ENCODE measurements at regions of chr14 and their contacts with region 1.

Region 1: GRCh38 chr14:91911474-91912032 is 35.9 kb downstream of the FBLN5 start:
- DNase-seq: peak; percentile 46
- H3K4me3 ChIP-seq: no peak overlapping the region
- H3K27ac ChIP-seq: no peak overlapping the region
- H3K4me1 ChIP-seq: no peaks in the 10 kb centered on the region
- H3K27me3 ChIP-seq: no peaks in the 10 kb centered on the region
- CTCF ChIP-seq: peak in 2 of 4 experiments; percentile 26 to 47
- EP300 ChIP-seq: no peak
- POLR2A ChIP-seq: no peak

Region 2: GRCh38 chr14:91649930-91650329 is 261.6 kb before region 1 on chr14:
- intact Hi-C with region 1: loop called (anchors 5 kb)
- DNase-seq: no peak
- H3K4me3 ChIP-seq: no peak overlapping the region
- H3K27ac ChIP-seq: no peak overlapping the region
- H3K4me1 ChIP-seq: no peaks in the 10 kb centered on the region
- H3K27me3 ChIP-seq: no peaks in the 10 kb centered on the region
- CTCF ChIP-seq: peak; percentile 10 to 70 (median 52)
- EP300 ChIP-seq: no peak
- POLR2A ChIP-seq: no peak

Region 3: DNA sequence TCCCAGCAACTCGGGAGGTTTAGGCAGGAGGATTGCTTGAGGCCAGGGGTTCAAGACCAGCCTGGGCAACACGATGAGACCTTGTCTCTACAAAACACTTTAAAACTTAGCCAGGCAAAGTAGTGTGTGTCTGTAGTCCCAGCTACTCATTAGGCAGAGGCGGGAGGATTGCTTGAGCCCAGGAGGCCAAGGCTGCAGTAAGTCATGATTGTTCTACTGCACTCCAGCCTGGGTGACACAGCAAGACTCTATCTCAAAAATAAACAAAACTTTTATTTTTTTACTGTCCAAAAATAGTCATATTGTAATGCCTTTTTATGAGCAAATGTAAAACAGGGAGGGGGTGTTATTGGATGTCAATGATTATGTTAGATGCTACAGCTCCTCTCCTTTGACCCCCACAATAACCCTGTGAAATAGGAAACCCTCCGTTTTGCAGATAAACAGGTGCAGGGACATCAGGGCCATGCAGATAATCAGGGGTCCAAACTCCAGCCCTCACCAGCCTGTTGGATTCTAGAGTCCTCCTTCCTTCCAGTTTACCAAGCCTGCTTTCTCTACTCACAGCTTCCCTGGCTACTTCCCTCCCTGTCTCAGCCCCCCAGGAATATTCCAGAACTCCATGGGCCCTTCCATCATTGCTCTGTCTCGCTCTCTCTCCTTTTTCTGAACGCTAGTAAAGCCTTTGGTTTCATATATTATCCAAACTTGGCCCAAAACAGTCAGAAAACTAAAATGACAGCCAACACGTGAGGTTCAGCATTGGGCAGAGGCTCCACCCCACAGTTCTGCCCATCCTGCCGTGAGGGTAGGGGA is 41.8 kb after region 1 on chr14:
- intact Hi-C with region 1: no loop called
- DNase-seq: no peak
- H3K4me3 ChIP-seq: no peak overlapping the region
- H3K27ac ChIP-seq: no peak overlapping the region
- H3K4me1 ChIP-seq: peaks cover 0 to under 1% (median 0%) of the 10 kb centered on the region in 4 donors
- H3K27me3 ChIP-seq: no peaks in the 10 kb centered on the region
- CTCF ChIP-seq: no peak
- EP300 ChIP-seq: no peak
- POLR2A ChIP-seq: no peak

Region 4: DNA sequence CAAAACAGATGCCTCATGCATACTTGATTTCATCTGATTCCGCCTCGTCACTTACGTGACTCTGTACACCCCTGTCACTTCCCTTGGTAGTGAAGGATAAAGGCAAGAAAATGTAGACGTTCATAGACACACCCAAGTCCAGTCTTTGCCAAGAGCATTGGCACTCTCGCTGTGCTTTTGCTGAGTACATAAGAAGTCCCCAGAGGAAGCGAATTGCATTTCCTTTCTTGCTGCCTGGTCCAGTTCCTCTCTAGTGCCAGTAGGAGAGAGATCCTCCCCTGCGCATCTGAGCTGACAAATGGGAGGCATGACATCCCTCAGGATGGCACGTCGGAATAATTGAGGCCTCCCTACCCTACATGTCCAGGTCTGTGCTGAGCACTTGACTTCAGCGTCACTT is 580.7 kb after region 1 on chr14:
- intact Hi-C with region 1: no loop called
- DNase-seq: no peak
- H3K4me3 ChIP-seq: no peak overlapping the region
- H3K27ac ChIP-seq: peak overlapping the region in 2 of 4 donors; percentile 48 to 51
- H3K4me1 ChIP-seq: peaks cover 0 to 3% (median 0%) of the 10 kb centered on the region in 4 donors
- H3K27me3 ChIP-seq: no peaks in the 10 kb centered on the region
- CTCF ChIP-seq: no peak
- EP300 ChIP-seq: peak in 1 of 4 donors; percentile 38
- POLR2A ChIP-seq: no peak